ENCODE measurements at regions of chr5 and their contacts with region 1.

Region 1: DNA sequence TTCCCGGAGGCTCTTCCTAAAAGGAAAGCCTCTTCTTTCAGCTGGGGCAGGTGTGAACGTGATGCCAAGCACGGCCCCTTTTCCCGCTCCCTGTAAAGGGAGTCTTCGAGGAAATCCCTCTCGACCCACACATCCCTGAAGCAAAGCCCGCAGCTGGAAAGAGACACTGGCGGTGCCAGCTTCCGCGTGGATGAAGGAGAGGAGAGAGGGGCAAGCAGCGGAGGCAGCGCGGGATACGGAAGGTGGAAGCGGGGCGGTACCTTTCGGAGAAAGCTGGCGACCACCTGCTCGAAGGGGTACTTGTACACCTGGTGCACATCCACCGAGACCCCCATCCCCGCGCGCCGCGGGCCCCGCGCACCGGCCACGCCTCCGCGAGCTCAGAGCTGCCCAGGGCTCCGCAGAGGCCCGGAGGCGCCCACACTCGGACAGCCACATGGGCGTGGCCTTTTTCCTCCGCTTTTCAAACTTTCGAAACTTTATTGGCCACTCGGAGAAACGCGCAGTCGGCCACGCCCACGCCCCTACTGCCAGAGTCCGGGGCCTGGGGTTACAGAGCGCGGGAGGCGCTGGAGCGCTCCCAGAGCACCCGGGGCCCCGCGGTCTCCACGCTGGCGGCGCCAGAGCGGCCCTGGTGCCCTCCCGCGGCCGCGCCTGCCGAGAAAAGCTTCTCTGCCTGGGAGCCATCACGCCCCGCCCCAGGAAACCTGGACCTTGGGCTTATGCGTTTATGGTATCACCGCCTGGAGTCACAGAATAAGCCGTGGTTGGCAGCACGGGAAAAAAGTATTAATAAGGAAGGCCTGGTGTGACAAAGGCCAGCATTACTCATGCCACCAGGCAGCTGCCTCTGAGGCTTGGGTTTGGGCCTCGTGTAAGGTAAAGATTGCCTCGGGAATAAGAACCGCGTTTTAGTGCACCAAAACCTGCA is at the start of gene PRELID2:
- DNase-seq: peak; percentile 84
- H3K4me3 ChIP-seq: peak within 1 kb of the TSS; percentile 61 to 67 (median 67)
- H3K27ac ChIP-seq: peak within 1 kb of the TSS; percentile 40
- H3K4me1 ChIP-seq: peaks cover 10% of the 10 kb centered on the region
- H3K27me3 ChIP-seq: no peaks in the 10 kb centered on the region
- CTCF ChIP-seq: peak in 1 of 2 donors; percentile 18
- total RNA-seq, gene PRELID2: 12.1 to 15.8 TPM

Region 2: DNA sequence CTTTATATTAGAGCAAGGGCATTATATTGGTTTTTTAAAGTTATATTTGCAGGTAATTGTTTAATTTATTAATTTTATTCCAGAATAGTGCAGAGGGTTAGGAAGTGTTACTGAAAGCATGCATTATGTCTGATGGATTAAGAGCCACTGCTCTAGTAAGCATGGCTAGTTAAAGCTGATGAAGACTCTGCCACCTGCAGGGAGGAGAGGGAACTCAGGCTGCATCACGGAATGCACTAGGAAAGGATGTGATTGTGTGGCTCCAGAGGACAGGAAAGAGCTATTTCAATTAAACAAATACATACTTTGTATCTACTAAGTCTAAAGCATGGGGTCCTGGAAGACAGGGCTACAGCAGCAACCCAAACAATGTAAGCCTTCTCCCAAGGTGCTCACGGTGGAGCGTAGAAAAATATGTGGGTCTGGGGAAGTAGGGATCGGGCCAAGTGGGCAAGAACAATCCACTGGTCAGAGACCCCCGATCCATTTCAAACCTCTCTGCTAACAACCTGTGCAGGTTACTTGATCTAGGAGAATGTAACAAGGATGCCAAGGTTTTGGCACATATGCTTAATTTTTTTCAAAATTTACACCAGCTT is 52.9 kb after region 1 on chr5:
- CTCF ChIA-PET with region 1: no interaction called
- dilution Hi-C with region 1: no loop called
- in situ Hi-C with region 1: no loop called
- intact Hi-C with region 1: loop called (anchors 1 kb)
- DNase-seq: peak; percentile 51
- H3K4me3 ChIP-seq: no peak overlapping the region
- H3K27ac ChIP-seq: no peak overlapping the region
- H3K4me1 ChIP-seq: no peaks in the 10 kb centered on the region
- H3K27me3 ChIP-seq: no peaks in the 10 kb centered on the region
- CTCF ChIP-seq: peak; percentile 93 to 96

Region 3: GRCh38 chr5:145925353-145925752 is 90.2 kb after region 1 on chr5:
- CTCF ChIA-PET with region 1: no interaction called
- dilution Hi-C with region 1: no loop called
- in situ Hi-C with region 1: no loop called
- intact Hi-C with region 1: loop called (anchors 1 kb)
- DNase-seq: peak; percentile 74
- H3K4me3 ChIP-seq: no peak overlapping the region
- H3K27ac ChIP-seq: peak overlapping the region; percentile 96
- H3K4me1 ChIP-seq: peaks cover 51% of the 10 kb centered on the region
- H3K27me3 ChIP-seq: no peaks in the 10 kb centered on the region
- CTCF ChIP-seq: no peak

Region 4: DNA sequence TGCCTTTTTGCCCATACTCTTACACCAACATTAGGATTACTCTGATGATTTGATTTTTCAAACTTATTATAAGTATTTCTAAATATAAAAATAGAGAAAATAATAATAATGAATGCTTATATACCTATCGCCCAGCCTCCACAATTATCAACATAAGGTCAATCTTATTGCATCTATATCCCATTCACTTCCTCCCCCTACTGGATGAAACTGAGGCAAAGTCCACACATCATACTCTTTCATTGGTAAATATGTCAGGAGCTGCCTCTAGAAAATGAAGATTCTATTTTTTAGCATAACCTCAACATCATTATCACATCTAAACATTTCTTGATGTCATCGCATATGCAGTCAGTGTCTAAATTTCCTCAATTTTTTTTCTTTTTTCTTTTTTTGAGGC is 145.5 kb after region 1 on chr5:
- CTCF ChIA-PET with region 1: no interaction called
- dilution Hi-C with region 1: no loop called
- in situ Hi-C with region 1: no loop called
- intact Hi-C with region 1: loop called (anchors 1 kb)
- DNase-seq: no peak
- H3K4me3 ChIP-seq: no peak overlapping the region
- H3K27ac ChIP-seq: no peak overlapping the region
- H3K4me1 ChIP-seq: peaks cover 32% of the 10 kb centered on the region
- H3K27me3 ChIP-seq: no peaks in the 10 kb centered on the region
- CTCF ChIP-seq: peak; percentile 17 to 33